Body of pancreas (tissue), 4 donors: ENCODE measurements at regions of chr3 and their contacts with region 1.

Region 1: DNA sequence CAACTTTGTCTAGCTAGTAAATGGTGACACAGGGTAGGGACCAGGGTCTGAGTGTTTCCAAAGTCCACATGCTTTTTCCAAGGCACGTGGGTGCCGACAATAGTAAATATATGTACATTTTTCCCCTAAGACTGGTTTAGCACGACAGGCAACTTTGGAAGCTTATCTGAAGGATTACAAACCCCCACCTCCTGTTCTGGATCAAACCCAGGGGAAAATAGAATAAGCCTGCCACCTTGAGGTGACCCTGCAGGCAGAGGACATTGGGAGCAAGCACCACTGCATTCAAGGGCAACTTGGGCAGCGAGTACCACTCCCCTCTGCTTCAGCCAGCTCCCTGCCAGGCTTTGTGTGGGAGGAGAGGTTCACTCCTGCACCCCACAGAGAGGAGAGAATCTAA is 44.8 kb downstream of the KBTBD12 start:
- DNase-seq: peak; percentile 37 to 59 (median 50)
- ATAC-seq: peak; percentile 60
- H3K4me3 ChIP-seq: no peak overlapping the region
- H3K27ac ChIP-seq: no peak overlapping the region
- H3K4me1 ChIP-seq: peaks cover 5% of the 10 kb centered on the region
- H3K27me3 ChIP-seq: no peaks in the 10 kb centered on the region
- CTCF ChIP-seq: peak in 6 of 7 experiments; percentile 30 to 66 (median 54)
- POLR2A ChIP-seq: no peak

Region 2: GRCh38 chr3:127652231-127652995 is 307.4 kb before region 1 on chr3:
- intact Hi-C with region 1: loop called (anchors 10 kb)
- DNase-seq: peak; percentile 47 to 56 (median 55)
- ATAC-seq: peak; percentile 53
- H3K4me3 ChIP-seq: no peak overlapping the region
- H3K27ac ChIP-seq: no peak overlapping the region
- H3K4me1 ChIP-seq: no peaks in the 10 kb centered on the region
- H3K27me3 ChIP-seq: no peaks in the 10 kb centered on the region
- CTCF ChIP-seq: peak; percentile 17 to 77 (median 71)
- POLR2A ChIP-seq: no peak